ENCODE measurements at regions of chr12 and their contacts with region 1.

Region 1: DNA sequence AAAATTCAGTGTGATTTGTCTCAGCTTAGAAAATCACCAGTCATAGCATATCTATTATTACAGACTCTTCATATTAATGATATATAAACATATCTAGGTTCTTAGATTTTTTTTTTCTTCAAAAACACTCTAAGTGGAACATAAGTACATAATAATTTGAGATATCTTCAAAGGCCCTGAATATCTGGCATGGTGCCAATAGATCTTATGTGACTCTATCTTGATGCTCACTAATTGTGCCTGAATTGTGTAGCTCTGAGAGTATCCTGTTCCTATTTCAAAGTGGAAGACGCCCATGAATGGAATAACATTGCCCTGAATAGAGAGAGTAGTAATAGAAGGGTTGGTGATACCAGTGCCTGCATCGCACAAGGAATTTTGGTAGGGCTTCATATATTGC is 1312.7 kb upstream of the USP15 start:
- DNase-seq: no peak
- ATAC-seq: no peak
- H3K4me3 ChIP-seq: no peak overlapping the region
- H3K27ac ChIP-seq: no peak overlapping the region
- H3K4me1 ChIP-seq: no peaks in the 10 kb centered on the region
- H3K27me3 ChIP-seq: no peaks in the 10 kb centered on the region

Region 2: DNA sequence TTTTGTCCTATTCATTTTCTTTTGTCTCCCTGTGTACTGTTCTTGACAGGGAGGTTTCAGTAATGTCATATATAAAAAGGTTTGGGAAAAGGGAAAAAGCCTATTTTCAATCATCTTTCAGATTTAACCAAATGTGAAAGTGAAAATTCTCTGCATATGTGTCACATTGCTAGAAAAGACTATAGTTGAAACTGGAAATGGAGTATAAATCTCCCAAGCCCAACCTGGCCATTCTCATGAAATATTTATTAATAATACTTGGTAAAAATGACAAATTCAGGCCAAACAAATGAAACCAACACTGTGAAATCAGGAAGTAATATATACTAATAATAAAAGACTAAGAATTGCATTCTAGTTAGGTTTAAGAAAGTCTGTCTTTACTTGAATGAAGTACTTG is 222.5 kb before region 1 on chr12:
- intact Hi-C with region 1: no loop called
- DNase-seq: no peak
- ATAC-seq: no peak
- H3K4me3 ChIP-seq: no peak overlapping the region
- H3K27ac ChIP-seq: no peak overlapping the region
- H3K4me1 ChIP-seq: no peaks in the 10 kb centered on the region
- H3K27me3 ChIP-seq: no peaks in the 10 kb centered on the region

Region 3: DNA sequence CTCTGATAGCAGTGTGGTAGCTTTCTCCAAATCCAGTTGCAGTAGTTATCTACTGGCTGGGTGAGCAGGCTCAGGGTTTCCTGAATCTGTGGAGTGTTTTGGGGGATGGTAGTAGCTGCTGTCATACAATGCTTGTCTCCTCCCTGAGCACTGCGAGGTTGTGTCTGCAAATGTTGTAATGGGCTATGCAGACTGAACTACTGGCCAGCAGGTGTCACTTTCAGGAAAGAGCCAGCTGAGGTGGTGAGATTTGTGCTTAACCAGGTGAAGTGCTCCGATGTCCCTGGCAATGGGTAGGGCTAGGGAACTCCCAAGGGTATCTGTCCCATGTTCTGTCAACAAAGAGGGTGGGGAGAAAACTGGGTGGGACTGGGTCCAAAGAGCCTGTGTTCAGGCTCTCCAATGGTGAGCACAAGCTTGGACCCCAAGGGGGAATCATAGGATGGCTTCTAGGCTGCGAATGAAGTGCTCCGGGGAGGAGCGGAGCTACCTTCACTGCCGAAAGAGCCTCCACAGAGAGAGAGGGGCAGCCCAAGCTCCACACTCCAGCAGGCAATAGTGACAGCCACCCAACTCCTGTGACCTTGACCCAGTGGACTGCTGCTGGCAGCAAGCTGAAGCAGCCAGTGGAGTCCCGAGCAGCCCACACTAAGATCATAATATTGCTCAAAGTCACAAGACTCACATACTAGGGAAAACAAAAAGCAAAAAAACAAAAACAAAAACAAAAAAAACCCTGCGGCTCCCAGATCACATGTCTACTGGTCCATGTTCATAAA is 11.4 kb before region 1 on chr12:
- intact Hi-C with region 1: loop called in 1 of 2 experiments (anchors 1 kb)
- DNase-seq: no peak
- ATAC-seq: no peak
- H3K4me3 ChIP-seq: no peak overlapping the region
- H3K27ac ChIP-seq: no peak overlapping the region
- H3K4me1 ChIP-seq: no peaks in the 10 kb centered on the region
- H3K27me3 ChIP-seq: no peaks in the 10 kb centered on the region

Measured in aorta (tissue), 5 donors.